Cardiac septum (tissue), 1 donor: ENCODE measurements at regions of chrX and their contacts with region 1.

Region 1: GRCh38 chrX:38803586-38804431 is 2.5 kb downstream of the MID1IP1 start:
- DNase-seq: peak; percentile 92

Region 2: GRCh38 chrX:38704146-38704882 is 99.5 kb before region 1 on chrX:
- intact Hi-C with region 1: no loop called
- DNase-seq: no peak

Region 3: DNA sequence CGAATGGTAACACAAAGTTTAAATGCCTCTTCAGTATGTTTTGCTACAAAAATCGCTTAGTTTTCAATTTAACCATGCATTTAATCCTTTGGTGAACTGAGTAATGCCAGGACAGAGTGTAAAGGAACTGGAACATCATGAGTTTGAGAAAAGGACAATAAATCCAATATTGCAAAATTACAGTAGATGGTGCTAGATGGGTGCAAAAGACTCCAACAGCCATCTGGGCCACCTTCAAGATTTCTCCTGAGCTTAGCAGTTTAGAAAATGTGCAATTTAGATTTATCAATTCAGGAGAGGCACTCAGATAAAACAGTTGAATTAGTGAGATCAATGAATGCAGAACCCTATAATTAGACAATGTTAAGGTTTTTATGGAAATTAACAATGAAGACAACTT is 35.7 kb before region 1 on chrX:
- intact Hi-C with region 1: no loop called
- DNase-seq: no peak

Region 4: DNA sequence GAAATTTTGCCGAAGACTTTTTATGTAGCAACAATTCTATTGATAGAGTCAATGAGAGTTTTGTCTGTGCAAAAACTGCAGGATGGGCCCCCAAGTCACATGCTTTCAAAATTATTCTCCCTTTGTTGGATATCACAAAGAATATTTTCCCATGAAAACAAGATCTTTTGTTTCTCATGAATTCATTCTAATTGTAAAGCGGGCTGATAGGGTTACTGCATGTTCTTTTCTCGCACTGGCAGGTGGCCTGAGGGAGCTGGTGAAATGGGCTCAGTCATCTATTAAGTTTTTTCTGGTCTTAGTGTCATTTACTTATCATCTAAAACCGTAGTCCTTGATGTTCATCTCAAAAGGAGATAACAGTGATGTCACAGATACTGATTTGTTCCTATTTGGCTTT is 41.6 kb after region 1 on chrX:
- intact Hi-C with region 1: loop called (anchors 5 kb)
- DNase-seq: no peak

Region 5: DNA sequence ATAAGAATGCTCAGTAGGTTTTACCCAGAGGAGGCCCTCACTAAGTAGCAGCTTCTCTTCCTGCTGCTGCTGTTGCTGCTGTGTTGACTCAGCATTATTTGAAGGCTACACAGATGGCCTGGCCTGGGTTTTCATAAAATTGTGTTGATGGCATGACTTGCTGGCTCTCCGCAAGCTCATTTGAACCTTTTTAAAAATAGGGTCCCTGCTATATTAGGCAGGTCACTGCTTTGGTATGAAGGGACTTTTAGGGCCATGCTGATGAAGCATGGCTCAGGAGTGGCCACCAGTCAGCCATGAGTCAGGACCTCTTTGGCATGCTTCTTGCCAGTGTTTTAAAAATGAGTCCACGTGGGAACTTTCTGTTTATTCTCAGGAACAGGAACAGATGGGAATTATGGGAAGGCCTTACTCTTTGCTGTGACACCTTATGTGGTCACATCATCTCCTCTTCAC is 126.2 kb after region 1 on chrX:
- intact Hi-C with region 1: loop called (anchors 10 kb)
- DNase-seq: no peak

Region 6: DNA sequence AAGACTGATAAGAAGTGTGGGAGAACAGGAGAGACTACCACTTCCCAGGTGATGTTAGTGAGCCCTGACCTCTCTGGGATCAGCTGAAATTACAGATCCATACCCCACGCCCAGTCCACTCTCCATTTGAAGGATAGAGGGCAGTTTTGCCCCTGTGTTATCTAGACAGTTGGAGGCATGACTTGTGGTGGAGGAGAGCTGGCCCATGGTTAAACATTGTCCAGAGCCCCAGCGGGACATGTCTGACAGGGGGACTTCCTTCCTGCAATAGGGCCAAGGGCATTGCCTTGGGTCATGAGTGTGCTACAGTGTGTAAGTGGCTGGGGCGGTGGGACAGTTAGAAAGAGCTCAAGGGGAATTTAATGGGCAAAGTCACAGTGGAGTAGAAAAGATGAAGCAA is 178.6 kb after region 1 on chrX:
- intact Hi-C with region 1: loop called (anchors 5 kb)
- DNase-seq: no peak

Region 7: GRCh38 chrX:39050427-39050826 is 246.6 kb after region 1 on chrX:
- intact Hi-C with region 1: no loop called
- DNase-seq: no peak

Region 8: GRCh38 chrX:39149761-39150160 is 346.0 kb after region 1 on chrX:
- intact Hi-C with region 1: loop called (anchors 10 kb)
- DNase-seq: no peak

Region 9: GRCh38 chrX:39258331-39258730 is 454.5 kb after region 1 on chrX:
- intact Hi-C with region 1: no loop called
- DNase-seq: no peak